ENCODE measurements at regions of chr12 and their contacts with region 1.

Region 1: DNA sequence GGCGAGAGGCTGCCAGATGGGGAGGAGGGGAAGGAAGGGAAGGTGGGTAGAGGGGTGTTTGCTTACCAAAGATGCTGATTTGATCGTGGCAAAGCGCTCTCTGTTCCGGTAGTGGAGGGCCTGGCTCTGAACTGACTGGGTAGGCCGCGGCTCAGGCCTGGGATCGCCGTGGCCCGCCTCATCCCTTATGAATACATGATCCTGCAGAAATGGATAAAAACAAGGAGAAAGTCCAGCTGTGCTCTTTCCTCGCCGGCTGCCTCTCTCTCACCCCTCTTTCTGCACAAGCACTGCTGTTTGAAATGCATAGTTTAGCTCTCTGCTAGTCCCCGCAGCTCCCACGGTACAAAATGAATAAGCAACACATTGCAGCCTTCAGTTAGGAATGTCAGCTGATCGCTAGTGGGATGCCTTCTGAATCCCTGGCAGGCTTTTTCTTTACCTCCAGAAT is 53.8 kb downstream of the PEBP1 start:
- DNase-seq: no peak
- ATAC-seq: peak; percentile 35 to 39
- H3K4me3 ChIP-seq: peak overlapping the region; percentile 37
- H3K27ac ChIP-seq: peak overlapping the region; percentile 49
- H3K4me1 ChIP-seq: no peaks in the 10 kb centered on the region
- H3K27me3 ChIP-seq: no peaks in the 10 kb centered on the region
- CTCF ChIP-seq: no peak

Region 2: GRCh38 chr12:118372541-118373495 is 183.1 kb after region 1 on chr12 and contains the start of gene TAOK3:
- intact Hi-C with region 1: loop called (anchors 10 kb)
- DNase-seq: peak; percentile 99
- ATAC-seq: peak; percentile 96 to 98
- H3K4me3 ChIP-seq: peak within 1 kb of the TSS; percentile 96
- H3K27ac ChIP-seq: peak within 1 kb of the TSS; percentile 87
- H3K4me1 ChIP-seq: peaks cover 43% of the 10 kb centered on the region
- H3K27me3 ChIP-seq: no peaks in the 10 kb centered on the region
- CTCF ChIP-seq: no peak
- total RNA-seq, gene TAOK3: 68.8 TPM